A549 (cell line): ENCODE measurements at regions of chr19 and their contacts with region 1.

Region 1: GRCh38 chr19:2070436-2070827 is 19.4 kb upstream of the MKNK2 start:
- DNase-seq: no peak
- ATAC-seq: no peak
- H3K4me3 ChIP-seq: no peak overlapping the region
- H3K27ac ChIP-seq: no peak overlapping the region
- H3K4me1 ChIP-seq: 0 out of 3 replicates have a peak, but pooled peaks cover 3% of the 10 kb centered on the region
- CTCF ChIP-seq: no peak
- EP300 ChIP-seq: no peak
- POLR2A ChIP-seq: no peak
- RAD21 ChIP-seq: no peak

Region 2: GRCh38 chr19:2021453-2022140 is 48.8 kb before region 1 on chr19:
- CTCF ChIA-PET with region 1: interaction called, 45 read pairs
- POLR2A ChIA-PET with region 1: no interaction called
- DNase-seq: no peak
- ATAC-seq: no peak
- H3K4me3 ChIP-seq: no peak overlapping the region
- H3K27ac ChIP-seq: 0 out of 6 replicates have a peak overlapping the region, but pooled peaks of 1 of the 2 experiments have one; percentile 22
- H3K4me1 ChIP-seq: no peaks in the 10 kb centered on the region; the same call in 2 of the 3 replicates
- CTCF ChIP-seq: no peak
- EP300 ChIP-seq: no peak
- POLR2A ChIP-seq: no peak
- RAD21 ChIP-seq: no peak

Region 3: GRCh38 chr19:2041683-2042484 is 28.5 kb before region 1 on chr19:
- CTCF ChIA-PET with region 1: interaction called, 14 read pairs
- POLR2A ChIA-PET with region 1: no interaction called
- DNase-seq: peak; percentile 87 to 96
- ATAC-seq: peak; percentile 87 to 93
- H3K4me3 ChIP-seq: peak overlapping the region; percentile 37
- H3K27ac ChIP-seq: peak overlapping the region; percentile 96 to 100
- H3K4me1 ChIP-seq: peaks cover 70% of the 10 kb centered on the region
- CTCF ChIP-seq: no peak
- EP300 ChIP-seq: no peak
- POLR2A ChIP-seq: no peak
- RAD21 ChIP-seq: no peak

Region 4: DNA sequence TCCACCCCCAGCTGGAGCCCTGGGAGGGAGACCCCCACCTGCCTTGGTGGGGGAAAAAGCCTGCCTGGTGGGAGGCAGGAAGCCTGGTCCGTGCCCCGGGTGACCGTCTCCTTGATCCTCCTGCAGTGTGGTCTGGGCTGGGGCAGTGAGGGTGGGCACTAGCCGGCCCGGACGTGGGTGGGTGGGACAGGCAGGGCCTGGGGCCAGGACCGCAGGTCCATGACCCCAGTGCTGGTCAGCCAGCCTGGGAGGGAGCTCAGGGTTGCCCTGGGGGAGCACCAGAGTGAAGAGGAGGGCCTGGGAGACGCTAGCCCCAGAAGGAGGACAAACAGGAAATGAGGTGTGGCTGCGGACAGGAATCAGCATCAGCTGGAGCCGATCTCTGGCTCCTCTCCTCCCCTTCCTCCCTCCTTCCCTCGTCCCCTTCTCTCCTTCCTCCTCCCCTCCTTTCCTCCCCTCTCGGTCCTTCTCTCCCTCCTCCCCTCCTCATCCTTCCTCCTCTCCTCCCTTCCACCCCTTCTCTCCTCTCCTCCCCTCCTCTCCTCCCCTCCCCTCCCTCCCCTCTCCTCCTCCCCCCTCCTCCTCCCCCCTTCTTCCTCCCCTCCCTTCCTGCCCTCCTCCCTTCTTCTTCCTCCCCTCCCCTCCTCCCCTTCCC is 14.1 kb before region 1 on chr19:
- CTCF ChIA-PET with region 1: interaction called, 24 read pairs
- POLR2A ChIA-PET with region 1: no interaction called
- DNase-seq: peak in 1 of 2 experiments; percentile 80
- ATAC-seq: peak; percentile 21 to 33
- H3K4me3 ChIP-seq: peak overlapping the region; percentile 48
- H3K27ac ChIP-seq: peak overlapping the region; percentile 99 to 100
- H3K4me1 ChIP-seq: peaks cover 66% of the 10 kb centered on the region
- CTCF ChIP-seq: no peak; the same call in 2 of the 3 replicates
- EP300 ChIP-seq: no peak
- POLR2A ChIP-seq: peak; percentile 27; the same call in 1 of the 2 replicates
- RAD21 ChIP-seq: no peak

Region 5: GRCh38 chr19:2096480-2097329 is 26.3 kb after region 1 on chr19 and contains the start of gene IZUMO4:
- CTCF ChIA-PET with region 1: interaction called, 15 read pairs
- POLR2A ChIA-PET with region 1: no interaction called
- DNase-seq: peak; percentile 82 to 97
- ATAC-seq: peak; percentile 88 to 95
- H3K4me3 ChIP-seq: peak within 1 kb of the TSS; percentile 69
- H3K27ac ChIP-seq: peak within 1 kb of the TSS; percentile 97
- H3K4me1 ChIP-seq: peaks cover 14% of the 10 kb centered on the region; the same call in 1 of the 3 replicates
- CTCF ChIP-seq: 0 out of 3 replicates have a peak, but pooled peaks have one; percentile 8
- EP300 ChIP-seq: no peak
- POLR2A ChIP-seq: no peak
- RAD21 ChIP-seq: no peak; a peak in 1 of 5 replicates
- polyA plus RNA-seq, gene IZUMO4: 0.36 and 0.70 TPM in 2 replicates